ENCODE measurements at regions of chr20 and their contacts with region 1.

Region 1: GRCh38 chr20:34302723-34303528 is at the start of gene AHCY:
- DNase-seq: peak; percentile 76 to 96 (median 91)
- ATAC-seq: peak; percentile 94
- H3K4me3 ChIP-seq: peak within 1 kb of the TSS; percentile 69 to 92
- H3K4me3 Mint-ChIP-seq: peak within 1 kb of the TSS; percentile 96
- H3K27ac ChIP-seq: peak within 1 kb of the TSS; percentile 67 to 86
- H3K27ac Mint-ChIP-seq: peak within 1 kb of the TSS; percentile 94
- H3K4me1 ChIP-seq: no peaks in the 10 kb centered on the region
- H3K4me1 Mint-ChIP-seq: peaks cover 17% of the 10 kb centered on the region
- H3K27me3 ChIP-seq: no peaks in the 10 kb centered on the region
- H3K27me3 Mint-ChIP-seq: no peaks in the 10 kb centered on the region
- CTCF ChIP-seq: no peak
- total RNA-seq, gene AHCY: 16.1 to 17.8 TPM

Region 2: GRCh38 chr20:34111702-34112599 is 191.0 kb before region 1 on chr20 and contains the start of gene EIF2S2:
- CTCF ChIA-PET with region 1: no interaction called
- POLR2A ChIA-PET with region 1: interaction called, 3 read pairs
- intact Hi-C with region 1: loop called (anchors 1 kb)
- DNase-seq: peak; percentile 91 to 99 (median 95)
- ATAC-seq: peak; percentile 89
- H3K4me3 ChIP-seq: peak within 1 kb of the TSS; percentile 81 to 86
- H3K4me3 Mint-ChIP-seq: peak within 1 kb of the TSS; percentile 96
- H3K27ac ChIP-seq: peak within 1 kb of the TSS; percentile 89 to 93
- H3K27ac Mint-ChIP-seq: peak within 1 kb of the TSS; percentile 98
- H3K4me1 ChIP-seq: peaks cover 34% of the 10 kb centered on the region
- H3K4me1 Mint-ChIP-seq: peaks cover 42% of the 10 kb centered on the region
- H3K27me3 ChIP-seq: no peaks in the 10 kb centered on the region
- H3K27me3 Mint-ChIP-seq: no peaks in the 10 kb centered on the region
- CTCF ChIP-seq: no peak
- total RNA-seq, gene EIF2S2: 19.4 to 19.6 TPM

Region 3: GRCh38 chr20:34558320-34559218 is 255.6 kb after region 1 on chr20 and contains the start of gene MAP1LC3A:
- CTCF ChIA-PET with region 1: no interaction called
- POLR2A ChIA-PET with region 1: interaction called, 3 read pairs
- intact Hi-C with region 1: loop called (anchors 1 kb)
- DNase-seq: peak; percentile 78 to 98 (median 90)
- ATAC-seq: peak; percentile 84
- H3K4me3 ChIP-seq: peak within 1 kb of the TSS; percentile 54 to 94
- H3K4me3 Mint-ChIP-seq: peak within 1 kb of the TSS; percentile 75
- H3K27ac ChIP-seq: peak within 1 kb of the TSS; percentile 79 to 97
- H3K27ac Mint-ChIP-seq: peak within 1 kb of the TSS; percentile 95
- H3K4me1 ChIP-seq: peaks cover 8% of the 10 kb centered on the region
- H3K4me1 Mint-ChIP-seq: peaks cover 12% of the 10 kb centered on the region
- H3K27me3 ChIP-seq: no peaks in the 10 kb centered on the region
- H3K27me3 Mint-ChIP-seq: no peaks in the 10 kb centered on the region
- CTCF ChIP-seq: no peak
- total RNA-seq, gene MAP1LC3A: 19.4 to 22.4 TPM

Region 4: GRCh38 chr20:34704177-34705007 is 401.5 kb after region 1 on chr20 and contains the start of gene TP53INP2:
- CTCF ChIA-PET with region 1: interaction called, 4 read pairs
- POLR2A ChIA-PET with region 1: no interaction called
- intact Hi-C with region 1: loop called (anchors 1 to 2 kb)
- DNase-seq: peak; percentile 71 to 96 (median 87)
- ATAC-seq: peak; percentile 53
- H3K4me3 ChIP-seq: peak within 1 kb of the TSS; percentile 78 to 96
- H3K4me3 Mint-ChIP-seq: peak within 1 kb of the TSS; percentile 93
- H3K27ac ChIP-seq: peak within 1 kb of the TSS; percentile 71 to 96
- H3K27ac Mint-ChIP-seq: peak within 1 kb of the TSS; percentile 95
- H3K4me1 ChIP-seq: peaks cover 14% of the 10 kb centered on the region
- H3K4me1 Mint-ChIP-seq: peaks cover 22% of the 10 kb centered on the region
- H3K27me3 ChIP-seq: peaks cover 0 to 6% of the 10 kb centered on the region in 2 experiments
- H3K27me3 Mint-ChIP-seq: peaks cover 8% of the 10 kb centered on the region
- CTCF ChIP-seq: no peak
- total RNA-seq, gene TP53INP2: 101 to 103 TPM

Region 5: DNA sequence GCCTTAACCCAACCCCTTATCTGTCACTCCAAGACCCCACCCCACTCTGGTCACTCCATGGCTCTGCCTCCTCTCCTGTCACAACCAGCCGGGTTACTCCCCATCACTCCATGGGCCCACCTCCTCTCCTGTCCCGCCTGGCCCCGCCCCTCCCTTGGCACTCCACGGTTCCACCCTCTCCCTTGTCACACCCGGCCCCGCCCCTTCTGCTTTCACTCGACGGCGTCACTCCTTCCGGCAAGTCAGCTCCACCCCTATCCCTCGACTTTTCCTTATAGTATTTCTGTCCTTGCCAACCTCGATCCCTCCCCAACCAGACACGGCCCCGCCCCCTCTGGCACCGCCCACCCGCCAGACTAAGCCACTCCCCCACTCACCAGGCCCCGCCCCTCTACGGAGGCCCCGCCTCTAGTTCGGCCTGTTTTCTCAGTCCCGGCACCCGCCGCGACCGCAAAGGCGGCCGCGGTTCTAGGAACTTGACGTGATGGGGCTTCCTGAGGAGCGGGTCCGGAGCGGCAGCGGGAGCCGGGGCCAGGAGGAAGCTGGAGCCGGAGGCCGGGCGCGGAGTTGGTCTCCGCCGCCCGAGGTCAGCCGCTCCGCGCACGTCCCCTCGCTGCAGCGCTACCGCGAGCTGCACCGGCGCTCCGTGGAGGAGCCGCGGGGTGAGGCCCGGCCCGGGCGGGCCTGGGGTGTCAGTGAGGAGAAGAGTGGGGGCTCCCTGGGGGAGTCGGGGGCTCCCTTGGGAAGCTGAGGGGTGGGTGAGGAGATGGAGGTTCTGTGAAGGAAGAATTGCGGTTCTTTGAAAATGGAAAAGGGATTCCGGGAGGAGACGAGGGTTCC is 573.5 kb after region 1 on chr20 and contains the start of gene ACSS2:
- CTCF ChIA-PET with region 1: no interaction called
- POLR2A ChIA-PET with region 1: no interaction called
- intact Hi-C with region 1: loop called in 1 of 2 experiments (anchors 1 kb)
- DNase-seq: peak; percentile 85 to 97 (median 91)
- ATAC-seq: peak; percentile 85
- H3K4me3 ChIP-seq: peak within 1 kb of the TSS; percentile 55 to 68
- H3K4me3 Mint-ChIP-seq: peak within 1 kb of the TSS; percentile 89
- H3K27ac ChIP-seq: peak within 1 kb of the TSS in 1 of 2 experiments; percentile 24
- H3K27ac Mint-ChIP-seq: peak within 1 kb of the TSS; percentile 57
- H3K4me1 ChIP-seq: peaks cover 46% of the 10 kb centered on the region
- H3K4me1 Mint-ChIP-seq: peaks cover 54% of the 10 kb centered on the region
- H3K27me3 ChIP-seq: no peaks in the 10 kb centered on the region
- H3K27me3 Mint-ChIP-seq: no peaks in the 10 kb centered on the region
- CTCF ChIP-seq: no peak
- total RNA-seq, gene ACSS2: 6.5 to 12.7 TPM

Region 6: GRCh38 chr20:35092524-35093266 is 789.8 kb after region 1 on chr20 and contains the start of gene TRPC4AP:
- CTCF ChIA-PET with region 1: no interaction called
- POLR2A ChIA-PET with region 1: no interaction called
- intact Hi-C with region 1: loop called in 1 of 2 experiments (anchors 5 kb)
- DNase-seq: peak; percentile 77 to 95 (median 87)
- ATAC-seq: peak; percentile 97
- H3K4me3 ChIP-seq: peak within 1 kb of the TSS; percentile 84 to 91
- H3K4me3 Mint-ChIP-seq: peak within 1 kb of the TSS; percentile 89
- H3K27ac ChIP-seq: peak within 1 kb of the TSS; percentile 72 to 74
- H3K27ac Mint-ChIP-seq: peak within 1 kb of the TSS; percentile 91
- H3K4me1 ChIP-seq: peaks cover 42% of the 10 kb centered on the region
- H3K4me1 Mint-ChIP-seq: peaks cover 49% of the 10 kb centered on the region
- H3K27me3 ChIP-seq: no peaks in the 10 kb centered on the region
- H3K27me3 Mint-ChIP-seq: no peaks in the 10 kb centered on the region
- CTCF ChIP-seq: peak; percentile 88
- total RNA-seq, gene TRPC4AP: 63.3 to 64.0 TPM

Measured in CD8-positive, alpha-beta T cell (primary cell).